ENCODE measurements at regions of chr7 and their contacts with region 1.

Region 1: DNA sequence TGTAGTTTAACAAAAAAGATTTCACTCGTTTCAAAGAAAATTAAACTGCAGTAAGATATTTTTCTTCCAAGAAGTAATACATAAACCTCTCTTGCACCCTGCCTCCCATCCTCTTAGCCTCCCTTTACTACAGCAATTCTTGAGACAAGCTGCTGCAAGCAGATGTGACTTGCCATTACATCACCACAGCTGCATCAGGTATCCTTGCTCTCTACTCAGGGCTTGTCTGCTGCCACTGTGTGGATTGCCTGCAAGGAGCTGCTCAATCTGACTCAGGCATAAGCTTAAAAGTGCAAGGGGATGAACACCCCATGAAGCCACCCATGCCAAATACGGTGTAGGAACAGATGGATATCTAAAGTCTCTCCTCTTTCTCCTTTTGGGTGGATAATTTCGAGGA is 609.9 kb downstream of the DNAJB9 start:
- DNase-seq: no peak
- H3K4me3 ChIP-seq: no peak overlapping the region
- H3K27ac ChIP-seq: no peak overlapping the region
- H3K4me1 ChIP-seq: no peaks in the 10 kb centered on the region
- H3K27me3 ChIP-seq: no peaks in the 10 kb centered on the region
- CTCF ChIP-seq: no peak
- EP300 ChIP-seq: no peak
- POLR2A ChIP-seq: no peak

Region 2: GRCh38 chr7:109282726-109283125 is 103.1 kb after region 1 on chr7:
- in situ Hi-C with region 1: loop called in 1 of 4 experiments (anchors 25 kb)
- intact Hi-C with region 1: no loop called
- DNase-seq: no peak
- H3K4me3 ChIP-seq: no peak overlapping the region
- H3K27ac ChIP-seq: no peak overlapping the region
- H3K4me1 ChIP-seq: no peaks in the 10 kb centered on the region
- H3K27me3 ChIP-seq: no peaks in the 10 kb centered on the region
- CTCF ChIP-seq: no peak
- EP300 ChIP-seq: no peak
- POLR2A ChIP-seq: no peak